Brain microvascular endothelial cell (primary cell): ENCODE measurements at regions of chr1 and their contacts with region 1.

Region 1: GRCh38 chr1:236489710-236490377 is 33.9 kb upstream of the LGALS8 start:
- DNase-seq: peak; percentile 44
- H3K4me3 ChIP-seq: no peak overlapping the region
- H3K27ac ChIP-seq: no peak overlapping the region
- H3K27me3 ChIP-seq: no peaks in the 10 kb centered on the region
- CTCF ChIP-seq: peak; percentile 44

Region 2: GRCh38 chr1:236103646-236104218 is 386.1 kb before region 1 on chr1:
- in situ Hi-C with region 1: loop called (anchors 25 kb)
- DNase-seq: peak; percentile 51
- H3K4me3 ChIP-seq: no peak overlapping the region
- H3K27ac ChIP-seq: no peak overlapping the region
- H3K27me3 ChIP-seq: no peaks in the 10 kb centered on the region
- CTCF ChIP-seq: peak; percentile 76

Region 3: GRCh38 chr1:236654957-236655356 is 165.1 kb after region 1 on chr1:
- in situ Hi-C with region 1: no loop called
- DNase-seq: no peak
- H3K4me3 ChIP-seq: no peak overlapping the region
- H3K27ac ChIP-seq: no peak overlapping the region
- H3K27me3 ChIP-seq: no peaks in the 10 kb centered on the region
- CTCF ChIP-seq: no peak

Region 4: GRCh38 chr1:237309595-237310118 is 819.8 kb after region 1 on chr1:
- in situ Hi-C with region 1: no loop called
- DNase-seq: no peak
- H3K4me3 ChIP-seq: no peak overlapping the region
- H3K27ac ChIP-seq: no peak overlapping the region
- H3K27me3 ChIP-seq: no peaks in the 10 kb centered on the region
- CTCF ChIP-seq: no peak